Caki2 (cell line): ENCODE measurements at regions of chr6 and their contacts with region 1.

Region 1: DNA sequence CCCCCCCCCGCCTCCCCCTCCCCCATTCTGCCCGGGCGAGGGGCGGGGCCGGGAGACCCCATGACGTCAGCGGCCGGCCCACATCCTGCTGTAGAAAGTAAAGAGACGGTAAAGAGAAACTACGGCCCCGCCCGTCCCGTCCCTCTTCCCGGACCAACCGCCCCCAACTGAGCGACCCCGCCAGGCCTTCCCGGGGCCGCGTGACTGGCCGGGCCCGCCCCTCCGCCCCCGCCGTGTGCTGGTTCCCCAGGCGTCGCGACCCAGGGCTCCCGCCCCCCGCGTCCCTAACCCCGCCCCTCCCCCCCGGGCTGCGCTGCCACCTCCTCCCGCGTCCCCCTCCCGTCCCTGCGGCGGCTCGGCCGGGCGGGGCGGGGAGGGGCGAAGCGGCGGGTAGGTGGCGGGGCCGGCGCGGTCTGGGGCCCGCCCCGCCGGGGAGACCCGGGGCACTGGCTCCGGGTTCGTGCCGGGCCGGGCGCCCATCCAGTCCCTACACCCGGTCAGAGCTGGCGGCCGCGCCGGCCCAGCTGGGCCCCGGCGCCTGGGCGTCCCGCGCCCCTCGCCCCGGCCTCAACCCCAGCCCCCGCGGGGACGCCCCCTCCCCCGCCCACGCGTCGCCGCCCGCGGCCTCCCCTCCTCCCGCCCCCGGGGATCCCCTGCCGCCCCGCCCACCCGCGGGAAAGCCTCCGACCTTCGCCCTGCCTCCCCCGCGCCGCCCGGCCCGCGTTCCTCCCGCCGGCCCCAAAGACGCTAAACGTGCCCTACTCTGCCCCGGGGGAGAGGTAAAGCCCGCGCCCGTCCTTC is 636 bp upstream of the HIVEP1 start:
- DNase-seq: peak; percentile 86

Region 2: GRCh38 chr6:11277275-11278206 is 733.9 kb before region 1 on chr6:
- in situ Hi-C with region 1: no loop called
- DNase-seq: peak; percentile 87

Region 3: GRCh38 chr6:11675601-11676000 is 335.9 kb before region 1 on chr6:
- in situ Hi-C with region 1: loop called (anchors 25 kb)
- DNase-seq: no peak

Region 4: DNA sequence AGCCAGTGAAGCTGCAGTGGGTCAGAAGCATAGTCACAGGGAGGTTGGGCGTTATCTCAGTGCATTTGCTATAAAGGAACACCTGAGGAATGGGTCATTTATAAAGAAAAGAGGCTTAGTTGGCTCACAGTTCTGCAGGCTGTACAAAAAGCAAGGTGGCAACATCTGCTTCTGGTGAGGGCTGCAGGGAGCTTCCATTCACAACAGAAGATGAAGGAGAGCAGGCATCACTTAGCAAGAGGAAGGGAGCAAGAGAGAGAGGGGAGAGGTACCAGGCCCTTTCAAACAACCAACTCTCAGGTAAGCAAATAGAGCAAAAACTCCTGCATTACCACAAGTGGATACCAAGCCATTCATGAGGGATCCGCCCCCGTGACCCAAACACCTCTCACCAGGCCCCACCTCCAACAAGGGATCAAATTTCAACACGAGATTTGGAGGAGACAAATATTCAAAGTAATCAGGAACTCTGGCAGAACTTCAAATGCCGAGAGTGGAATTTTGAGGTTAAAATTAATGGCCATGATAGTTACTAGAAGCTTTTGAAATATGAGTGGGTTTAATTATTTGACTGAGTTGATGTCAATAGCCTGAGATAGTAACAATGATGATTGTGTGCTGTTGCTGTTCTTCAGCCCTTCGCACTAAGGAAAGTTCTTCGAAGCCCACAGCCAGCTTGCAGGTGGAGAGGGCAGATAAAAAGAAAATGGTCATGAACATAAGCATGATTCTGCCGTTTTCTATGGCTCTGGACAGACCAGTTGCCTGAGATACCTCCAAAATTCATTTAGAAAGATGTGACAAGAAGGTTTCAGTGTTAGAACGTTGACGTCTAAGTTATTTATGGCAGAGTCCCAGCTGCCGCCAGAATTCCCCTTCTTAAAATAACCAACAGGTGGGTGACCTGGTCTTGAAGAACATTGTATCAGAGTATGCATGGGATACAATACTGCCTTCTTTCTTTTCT is 177.6 kb before region 1 on chr6:
- in situ Hi-C with region 1: no loop called
- DNase-seq: no peak

Region 5: GRCh38 chr6:12275087-12275486 is 263.6 kb after region 1 on chr6:
- in situ Hi-C with region 1: no loop called
- DNase-seq: peak; percentile 46